ENCODE measurements at regions of chr4 and their contacts with region 1.

Region 1: DNA sequence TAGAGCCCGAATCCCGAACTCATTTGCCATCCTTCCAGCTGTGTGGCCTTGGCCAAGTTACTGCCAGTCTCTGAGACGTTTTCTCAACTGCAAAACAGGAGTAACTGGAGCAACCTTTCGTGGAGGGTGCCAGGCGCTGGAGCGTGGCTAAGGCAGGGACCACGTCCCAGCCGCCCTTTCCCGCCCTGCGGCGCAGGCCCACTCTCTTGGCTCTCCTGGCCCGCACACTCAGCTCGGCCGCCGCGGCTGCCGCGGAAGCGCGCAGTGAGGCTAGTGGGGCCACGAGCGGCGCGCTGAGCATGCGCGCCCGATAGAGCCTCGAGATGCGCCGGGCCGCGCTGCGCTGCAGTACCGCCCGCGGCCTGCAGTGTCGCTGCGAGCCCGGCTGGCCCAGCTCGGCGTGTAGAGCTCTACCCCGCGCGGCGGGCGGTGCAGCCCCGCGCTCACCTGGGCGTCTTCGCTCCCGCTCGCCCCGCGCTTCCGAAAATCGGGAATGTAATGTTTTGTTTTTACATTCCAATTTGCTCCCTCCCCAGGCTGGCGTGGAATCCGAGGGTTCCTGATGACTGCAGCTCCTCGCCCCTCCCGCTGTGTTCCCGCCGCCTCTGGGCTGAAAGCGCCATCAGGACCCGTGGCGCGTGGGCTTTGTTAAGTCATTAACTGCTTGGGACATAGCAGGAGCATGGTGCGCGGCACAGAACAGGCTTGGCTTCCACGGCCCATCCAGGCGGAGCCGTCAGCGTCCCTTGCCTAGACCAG is 4.0 kb upstream of the ZNF518B start:
- DNase-seq: peak; percentile 68
- ATAC-seq: peak; percentile 81
- H3K4me3 Mint-ChIP-seq: peak overlapping the region; percentile 89
- H3K27ac Mint-ChIP-seq: no peak overlapping the region
- H3K4me1 Mint-ChIP-seq: peaks cover 16% of the 10 kb centered on the region
- H3K27me3 Mint-ChIP-seq: peaks cover 84% of the 10 kb centered on the region
- CTCF ChIP-seq: peak; percentile 98

Region 2: GRCh38 chr4:10157478-10158332 is 303.6 kb before region 1 on chr4:
- CTCF ChIA-PET with region 1: interaction called, 14 read pairs
- POLR2A ChIA-PET with region 1: no interaction called
- DNase-seq: peak; percentile 55
- ATAC-seq: peak; percentile 89
- H3K4me3 Mint-ChIP-seq: no peak overlapping the region
- H3K27ac Mint-ChIP-seq: no peak overlapping the region
- H3K4me1 Mint-ChIP-seq: peaks cover 6% of the 10 kb centered on the region
- H3K27me3 Mint-ChIP-seq: peaks cover 17% of the 10 kb centered on the region
- CTCF ChIP-seq: peak; percentile 46; the same call in 1 of the 2 replicates

Region 3: GRCh38 chr4:10442976-10443375 is 18.3 kb before region 1 on chr4:
- CTCF ChIA-PET with region 1: interaction called, 12 read pairs
- POLR2A ChIA-PET with region 1: no interaction called
- DNase-seq: no peak
- ATAC-seq: no peak
- H3K4me3 Mint-ChIP-seq: no peak overlapping the region
- H3K27ac Mint-ChIP-seq: no peak overlapping the region
- H3K4me1 Mint-ChIP-seq: peaks cover 12% of the 10 kb centered on the region
- H3K27me3 Mint-ChIP-seq: no peaks in the 10 kb centered on the region; the same call in none of the 2 replicates
- CTCF ChIP-seq: no peak

Region 4: GRCh38 chr4:10496200-10496599 is 34.9 kb after region 1 on chr4:
- CTCF ChIA-PET with region 1: interaction called, 16 read pairs
- POLR2A ChIA-PET with region 1: no interaction called
- DNase-seq: peak; percentile 43
- ATAC-seq: peak; percentile 93
- H3K4me3 Mint-ChIP-seq: peak overlapping the region; percentile 50
- H3K27ac Mint-ChIP-seq: peak overlapping the region; percentile 94
- H3K4me1 Mint-ChIP-seq: peaks cover 67% of the 10 kb centered on the region
- H3K27me3 Mint-ChIP-seq: peaks cover 58% of the 10 kb centered on the region
- CTCF ChIP-seq: no peak

Region 5: GRCh38 chr4:10535912-10536311 is 74.6 kb after region 1 on chr4:
- CTCF ChIA-PET with region 1: interaction called, 17 read pairs
- POLR2A ChIA-PET with region 1: no interaction called
- DNase-seq: no peak
- ATAC-seq: no peak
- H3K4me3 Mint-ChIP-seq: no peak overlapping the region
- H3K27ac Mint-ChIP-seq: no peak overlapping the region
- H3K4me1 Mint-ChIP-seq: peaks cover 12% of the 10 kb centered on the region
- H3K27me3 Mint-ChIP-seq: no peaks in the 10 kb centered on the region
- CTCF ChIP-seq: no peak

Region 6: GRCh38 chr4:10706236-10706635 is 245.0 kb after region 1 on chr4:
- CTCF ChIA-PET with region 1: no interaction called
- POLR2A ChIA-PET with region 1: no interaction called
- DNase-seq: no peak
- ATAC-seq: no peak
- H3K4me3 Mint-ChIP-seq: no peak overlapping the region
- H3K27ac Mint-ChIP-seq: no peak overlapping the region
- H3K4me1 Mint-ChIP-seq: no peaks in the 10 kb centered on the region
- H3K27me3 Mint-ChIP-seq: no peaks in the 10 kb centered on the region; the same call in 1 of the 2 replicates
- CTCF ChIP-seq: no peak

Measured in WTC11 (cell line).